Panc1 (cell line): ENCODE measurements at regions of chr7 and their contacts with region 1.

Region 1: GRCh38 chr7:138801256-138801655 is 3.3 kb upstream of the ATP6V0A4 start:
- DNase-seq: no peak
- ATAC-seq: no peak
- H3K4me3 ChIP-seq: no peak overlapping the region
- H3K27ac ChIP-seq: no peak overlapping the region
- H3K4me1 ChIP-seq: no peaks in the 10 kb centered on the region
- H3K27me3 ChIP-seq: no peaks in the 10 kb centered on the region
- CTCF ChIP-seq: no peak

Region 2: DNA sequence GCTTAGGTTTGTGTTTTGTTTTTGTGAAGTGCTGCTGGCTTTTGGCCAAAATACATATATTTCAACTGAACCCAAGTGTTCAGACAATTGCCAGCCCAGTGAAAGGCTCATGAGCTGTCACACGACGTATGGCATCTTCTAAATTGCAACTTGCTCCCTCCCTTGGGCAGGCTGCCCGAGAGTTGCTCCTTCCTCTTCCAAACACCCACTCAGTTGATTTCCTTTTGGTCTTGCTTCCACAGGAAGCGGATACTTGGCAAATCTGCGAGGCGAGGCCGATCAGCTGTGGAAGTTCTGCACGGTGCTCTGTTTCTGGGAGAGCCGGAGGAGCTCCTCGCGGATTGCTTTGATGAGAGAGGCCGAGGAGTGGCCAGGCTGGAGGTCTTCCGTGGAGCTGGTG is 36.4 kb after region 1 on chr7:
- CTCF ChIA-PET with region 1: no interaction called
- POLR2A ChIA-PET with region 1: no interaction called
- in situ Hi-C with region 1: no loop called
- intact Hi-C with region 1: no loop called
- DNase-seq: no peak
- ATAC-seq: no peak
- H3K4me3 ChIP-seq: no peak overlapping the region
- H3K27ac ChIP-seq: no peak overlapping the region
- H3K4me1 ChIP-seq: no peaks in the 10 kb centered on the region
- H3K27me3 ChIP-seq: no peaks in the 10 kb centered on the region
- CTCF ChIP-seq: no peak

Region 3: DNA sequence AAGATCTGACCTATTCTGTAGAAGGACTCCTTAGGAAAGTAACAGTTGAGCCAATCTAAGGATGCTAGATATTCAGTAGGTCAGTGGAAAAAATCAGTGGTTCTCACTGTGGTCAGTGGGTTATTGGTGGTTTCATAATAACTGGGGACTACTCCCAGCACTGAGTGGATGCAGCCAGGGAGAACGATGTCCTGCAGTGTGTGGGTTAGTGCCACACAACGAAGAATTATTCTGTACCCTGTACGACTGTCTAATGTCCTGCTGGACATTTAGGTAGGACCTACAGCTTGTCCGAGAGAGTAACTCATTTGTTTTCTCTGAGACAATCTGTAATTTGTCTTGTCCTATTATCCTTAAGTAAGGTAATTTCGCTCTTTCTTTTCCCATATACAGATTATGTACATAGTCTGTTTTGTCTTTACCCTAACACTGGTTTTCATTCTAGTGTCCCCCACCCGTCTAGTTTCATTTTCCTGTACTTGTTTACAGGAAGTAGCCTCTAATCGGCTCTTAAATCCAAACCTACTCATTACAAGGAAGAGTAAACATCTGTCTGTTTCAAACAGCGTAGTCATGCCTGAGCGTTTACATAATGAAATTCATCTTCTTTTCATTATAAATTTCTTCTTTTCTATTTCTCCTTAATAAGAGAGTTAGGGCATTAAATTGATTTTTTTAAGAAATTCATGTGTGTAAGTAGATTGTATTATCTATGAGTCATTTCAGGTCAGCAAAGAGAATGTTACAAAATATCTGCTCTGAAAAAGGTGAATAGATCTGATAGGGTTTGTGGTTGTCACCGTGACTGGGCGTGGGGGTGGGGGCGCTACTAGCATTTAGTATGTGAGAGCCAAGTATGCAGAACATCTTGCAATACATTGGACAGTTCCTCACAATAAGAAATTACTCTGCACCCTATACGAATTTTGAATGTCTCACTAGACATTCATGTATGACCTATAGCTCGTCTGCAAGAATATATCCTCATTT is 242.9 kb after region 1 on chr7:
- CTCF ChIA-PET with region 1: no interaction called
- POLR2A ChIA-PET with region 1: no interaction called
- in situ Hi-C with region 1: no loop called
- intact Hi-C with region 1: no loop called
- DNase-seq: no peak
- ATAC-seq: no peak
- H3K4me3 ChIP-seq: no peak overlapping the region
- H3K27ac ChIP-seq: no peak overlapping the region
- H3K4me1 ChIP-seq: no peaks in the 10 kb centered on the region
- H3K27me3 ChIP-seq: no peaks in the 10 kb centered on the region
- CTCF ChIP-seq: no peak

Region 4: GRCh38 chr7:139200382-139200781 is 399.1 kb after region 1 on chr7:
- CTCF ChIA-PET with region 1: no interaction called
- POLR2A ChIA-PET with region 1: interaction called, 14 read pairs
- in situ Hi-C with region 1: no loop called
- intact Hi-C with region 1: no loop called
- DNase-seq: no peak
- ATAC-seq: no peak
- H3K4me3 ChIP-seq: no peak overlapping the region
- H3K27ac ChIP-seq: no peak overlapping the region
- H3K4me1 ChIP-seq: no peaks in the 10 kb centered on the region
- H3K27me3 ChIP-seq: no peaks in the 10 kb centered on the region
- CTCF ChIP-seq: no peak